Motor neuron (in vitro differentiated cells): ENCODE measurements at regions of chr1 and their contacts with region 1.

Region 1: GRCh38 chr1:11719313-11720032 is 16.5 kb upstream of the AGTRAP start:
- ATAC-seq: peak; percentile 67 to 84 (median 78)
- H3K4me3 ChIP-seq: no peak overlapping the region
- H3K27ac ChIP-seq: peak overlapping the region; percentile 17
- H3K4me1 ChIP-seq: peaks cover 15 to 19% of the 10 kb centered on the region in 2 donors

Region 2: GRCh38 chr1:11661103-11661502 is 58.4 kb before region 1 on chr1:
- in situ Hi-C with region 1: loop called in 3 of 9 experiments (anchors 10 kb)
- ATAC-seq: no peak
- H3K4me3 ChIP-seq: no peak overlapping the region
- H3K27ac ChIP-seq: no peak overlapping the region
- H3K4me1 ChIP-seq: peaks cover 3% of the 10 kb centered on the region in 2 donors

Region 3: GRCh38 chr1:12040457-12041051 is 321.1 kb after region 1 on chr1:
- in situ Hi-C with region 1: no loop called
- ATAC-seq: peak in 7 of 8 experiments; percentile 48 to 82 (median 59)
- H3K4me3 ChIP-seq: no peak overlapping the region
- H3K27ac ChIP-seq: peak overlapping the region in 1 of 2 donors; percentile 22
- H3K4me1 ChIP-seq: peaks cover 36 to 47% of the 10 kb centered on the region in 2 donors